Panc1 (cell line): ENCODE measurements at regions of chr3 and their contacts with region 1.

Region 1: DNA sequence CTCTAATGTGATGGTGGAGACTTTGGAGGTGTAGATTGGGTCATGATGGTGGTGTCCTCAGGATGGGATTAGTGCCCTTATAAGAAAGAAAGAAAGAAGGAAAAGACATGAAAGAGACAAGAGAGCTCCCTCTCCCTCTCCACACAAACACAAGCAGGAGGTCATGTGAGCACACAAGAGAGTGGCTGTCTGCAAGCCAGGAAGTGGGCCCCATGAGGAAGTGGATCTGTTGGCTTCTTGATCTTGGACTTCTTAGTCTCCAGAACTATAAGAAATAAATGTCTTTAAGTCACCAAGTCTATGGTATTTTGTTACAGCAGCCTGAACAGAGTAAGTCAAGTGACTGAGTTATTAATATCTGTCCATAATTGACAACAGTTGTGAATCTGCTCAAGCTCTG is 17.1 kb downstream of the IQCB1 start:
- DNase-seq: no peak
- ATAC-seq: no peak
- H3K4me3 ChIP-seq: no peak overlapping the region
- H3K27ac ChIP-seq: no peak overlapping the region
- H3K4me1 ChIP-seq: no peaks in the 10 kb centered on the region
- H3K27me3 ChIP-seq: no peaks in the 10 kb centered on the region
- CTCF ChIP-seq: no peak

Region 2: GRCh38 chr3:121793078-121793477 is 24.7 kb before region 1 on chr3:
- CTCF ChIA-PET with region 1: no interaction called
- POLR2A ChIA-PET with region 1: interaction called, 10 read pairs
- in situ Hi-C with region 1: no loop called
- intact Hi-C with region 1: no loop called
- DNase-seq: no peak
- ATAC-seq: no peak
- H3K4me3 ChIP-seq: no peak overlapping the region
- H3K27ac ChIP-seq: no peak overlapping the region
- H3K4me1 ChIP-seq: no peaks in the 10 kb centered on the region
- H3K27me3 ChIP-seq: no peaks in the 10 kb centered on the region
- CTCF ChIP-seq: no peak